Breast epithelium (tissue), 4 donors: ENCODE measurements at regions of chr10 and their contacts with region 1.

Region 1: DNA sequence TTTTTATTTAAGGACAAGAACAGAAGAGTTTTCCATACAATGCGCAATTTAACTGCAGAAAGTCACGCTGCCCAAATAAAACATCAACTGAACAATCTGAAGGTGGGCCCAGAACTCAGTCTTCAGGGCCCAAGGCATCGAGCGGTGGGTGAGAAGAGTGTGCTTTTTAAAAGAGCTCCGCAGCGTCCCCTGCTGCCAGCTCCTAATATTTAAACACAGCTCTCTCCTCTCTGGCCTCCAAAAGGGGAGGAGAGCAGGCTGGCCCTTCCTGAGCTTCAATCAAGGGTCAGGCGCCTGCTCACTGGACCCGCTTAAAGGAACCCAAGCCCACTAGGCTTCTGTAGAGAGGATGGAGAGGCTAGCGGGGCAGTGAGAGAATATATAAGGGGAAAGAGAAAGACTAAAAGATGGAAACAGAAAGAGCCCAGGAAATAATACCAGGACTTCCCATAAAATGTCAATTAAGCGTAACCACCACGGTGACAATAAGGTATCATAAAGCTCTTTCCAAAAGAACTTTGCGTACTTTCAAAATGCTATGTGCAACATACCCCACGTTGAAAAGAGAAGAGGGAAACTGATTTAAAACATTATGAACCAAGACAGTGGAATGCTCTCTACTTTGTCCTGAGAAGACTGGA is 2.8 kb downstream of the FAM53B start:
- DNase-seq: peak in 1 of 2 donors; percentile 73
- H3K4me3 ChIP-seq: peak overlapping the region in 2 of 3 donors; percentile 28 to 55
- H3K27ac ChIP-seq: peak overlapping the region; percentile 61 to 90
- H3K4me1 ChIP-seq: peaks cover 11 to 48% of the 10 kb centered on the region in 2 donors
- H3K27me3 ChIP-seq: no peaks in the 10 kb centered on the region
- CTCF ChIP-seq: peak; percentile 90 to 95 (median 93)
- POLR2A ChIP-seq: no peak

Region 2: DNA sequence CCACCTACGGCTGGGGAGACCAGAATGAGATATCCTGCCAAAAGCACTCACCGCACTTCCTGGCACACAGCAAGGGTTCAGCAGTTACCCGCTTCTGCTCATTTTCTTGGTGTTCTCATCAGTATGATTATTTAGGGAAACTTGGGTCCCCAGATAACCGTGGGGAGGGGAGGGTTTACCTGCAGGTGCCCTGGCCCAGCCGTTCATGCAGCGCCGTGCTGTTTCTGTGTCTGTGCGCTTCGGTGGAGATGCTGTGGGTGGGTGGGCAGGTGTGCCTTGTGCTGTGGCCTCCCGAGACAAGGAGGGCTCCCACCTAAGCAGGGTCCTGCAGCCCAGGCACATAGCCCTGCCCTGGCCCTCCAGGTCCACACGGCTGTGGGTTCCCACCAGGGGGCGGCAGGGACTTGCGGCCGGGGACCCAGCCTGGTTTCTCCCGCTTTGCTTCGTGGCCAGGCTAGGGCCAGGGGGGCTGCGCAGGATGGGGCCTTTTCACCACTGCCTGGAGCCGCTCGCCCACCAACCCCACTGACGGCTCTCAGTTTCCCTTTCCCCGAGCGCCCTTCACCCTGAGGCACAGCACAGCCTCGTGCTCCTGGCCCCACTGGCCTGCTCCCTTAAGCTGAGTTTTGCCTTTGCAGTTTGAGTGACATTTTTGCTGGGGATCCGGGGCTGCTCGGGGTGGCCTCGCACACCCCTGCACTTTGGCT is 201.3 kb before region 1 on chr10:
- intact Hi-C with region 1: loop called (anchors 5 kb)
- DNase-seq: no peak
- H3K4me3 ChIP-seq: no peak overlapping the region
- H3K27ac ChIP-seq: no peak overlapping the region
- H3K4me1 ChIP-seq: no peaks in the 10 kb centered on the region
- H3K27me3 ChIP-seq: no peaks in the 10 kb centered on the region
- CTCF ChIP-seq: peak; percentile 10 to 64 (median 55)
- POLR2A ChIP-seq: no peak

Region 3: DNA sequence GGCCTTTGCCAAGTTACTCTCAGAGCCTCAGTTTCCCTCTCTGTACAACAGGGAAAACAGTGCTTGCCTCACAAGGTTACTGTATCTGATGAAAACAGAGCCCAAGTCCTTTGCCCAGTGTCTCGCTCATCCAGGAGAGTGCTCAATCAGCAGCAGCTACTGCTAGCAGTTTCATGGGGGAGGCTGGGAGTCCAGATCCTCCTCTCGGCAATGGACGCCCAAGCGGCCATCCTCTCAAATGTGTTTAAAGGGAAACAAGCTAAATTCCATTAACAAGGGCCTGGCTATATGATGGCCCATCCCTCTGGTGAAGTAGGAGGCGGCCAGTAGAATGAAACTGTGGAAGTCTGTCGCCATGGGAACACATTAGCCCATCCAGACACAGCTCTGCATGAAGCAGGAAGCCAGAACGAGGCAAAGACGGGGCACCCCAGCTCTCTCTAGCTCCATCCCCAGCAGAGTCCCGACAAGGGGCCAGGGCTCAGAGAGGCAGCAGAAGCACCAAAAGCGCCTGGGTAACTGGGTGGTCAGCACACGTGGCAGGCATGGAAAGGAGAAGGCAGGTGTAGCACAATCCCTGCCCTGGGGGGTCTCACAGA is 32.4 kb before region 1 on chr10:
- intact Hi-C with region 1: loop called (anchors 5 kb)
- DNase-seq: no peak
- H3K4me3 ChIP-seq: no peak overlapping the region
- H3K27ac ChIP-seq: peak overlapping the region; percentile 73 to 85
- H3K4me1 ChIP-seq: peaks cover 11 to 14% of the 10 kb centered on the region in 2 donors
- H3K27me3 ChIP-seq: no peaks in the 10 kb centered on the region
- CTCF ChIP-seq: no peak
- POLR2A ChIP-seq: no peak